Vagina (tissue), 2 donors: ENCODE measurements at regions of chr17 and their contacts with region 1.

Region 1: DNA sequence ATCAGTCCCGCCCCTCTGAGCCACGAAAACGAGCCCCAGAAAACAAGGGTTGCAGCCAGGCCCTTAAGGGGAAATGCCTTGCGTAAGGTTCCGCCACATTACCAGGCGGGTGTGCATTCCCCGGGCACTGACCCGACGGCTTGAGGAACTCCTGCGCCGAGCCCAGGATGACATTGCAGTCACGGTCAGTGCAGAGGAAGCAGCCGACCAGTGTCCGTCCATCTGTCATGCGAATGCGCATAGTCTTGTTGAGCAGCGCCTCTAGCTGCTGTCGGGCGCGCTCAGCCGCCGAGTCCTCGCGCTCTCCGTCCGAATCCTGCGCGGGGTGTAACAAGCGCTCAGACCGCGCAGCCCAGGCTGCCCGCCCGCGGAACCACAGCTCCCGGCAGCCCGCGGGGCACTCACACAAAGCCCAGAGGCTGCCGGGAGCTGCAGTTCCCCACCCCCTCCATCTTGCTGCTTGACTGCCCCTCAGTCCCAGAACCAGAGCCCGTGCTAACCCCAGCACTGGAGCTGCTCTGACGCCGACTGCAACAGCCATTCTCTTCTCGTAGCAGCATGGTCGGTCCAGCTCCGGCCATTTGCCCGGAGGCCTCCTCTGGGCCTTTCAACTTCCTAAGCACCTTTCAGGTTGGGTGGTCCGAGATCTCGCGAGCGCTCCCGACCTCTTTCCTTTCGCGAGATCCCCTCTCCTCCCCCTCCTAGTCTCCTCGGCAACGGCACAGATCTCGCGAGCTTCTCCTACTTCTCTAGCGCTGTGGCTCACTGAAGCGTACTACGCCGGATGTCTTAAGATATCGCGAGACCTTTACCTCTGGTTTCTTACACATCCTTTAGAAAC is at the start of gene NAA38:
- DNase-seq: peak; percentile 96 to 99
- H3K4me3 ChIP-seq: peak within 1 kb of the TSS; percentile 53 to 72
- H3K27ac ChIP-seq: peak within 1 kb of the TSS; percentile 85
- H3K4me1 ChIP-seq: peaks cover 38% of the 10 kb centered on the region
- H3K27me3 ChIP-seq: no peaks in the 10 kb centered on the region
- CTCF ChIP-seq: peak in 2 of 3 experiments; percentile 11 to 31
- POLR2A ChIP-seq: peak in 1 of 2 donors; percentile 54
- total RNA-seq, gene NAA38: 83.5 TPM

Region 2: DNA sequence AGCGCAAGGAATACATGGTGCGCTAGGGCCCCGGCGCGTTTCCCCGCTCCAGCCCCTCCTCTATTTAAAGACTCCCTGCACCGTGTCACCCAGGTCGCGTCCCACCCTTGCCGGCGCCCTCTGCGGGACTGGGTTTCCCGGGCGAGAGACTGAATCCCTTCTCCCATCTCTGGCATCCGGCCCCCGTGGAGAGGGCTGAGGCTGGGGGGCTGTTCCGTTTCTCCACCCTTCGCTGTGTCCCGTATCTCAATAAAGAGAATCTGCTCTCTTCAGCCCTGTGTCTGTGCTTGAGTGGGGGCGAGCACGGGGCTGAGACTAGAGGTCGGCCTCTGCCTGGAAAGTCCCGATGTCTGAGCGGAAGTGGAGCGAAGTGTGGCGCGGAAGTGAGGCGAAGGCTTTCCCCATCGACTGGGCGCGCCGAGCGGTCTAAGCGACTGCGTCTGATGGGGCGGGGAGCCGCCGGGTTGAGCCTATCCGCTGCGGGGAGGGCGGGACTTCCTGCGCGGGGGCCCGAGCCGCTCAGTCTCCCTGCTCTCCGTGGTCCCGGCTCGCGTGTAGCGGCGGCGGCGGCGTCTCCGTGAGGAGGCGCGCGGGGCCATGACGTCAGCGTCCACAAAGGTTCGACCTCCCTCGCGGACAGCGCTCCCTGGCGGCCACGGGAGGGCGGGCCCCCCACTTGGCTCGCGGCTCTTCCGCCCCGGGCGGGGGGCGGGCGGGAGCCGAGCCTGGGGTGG is 842.7 kb before region 1 on chr17:
- intact Hi-C with region 1: no loop called
- DNase-seq: peak in 1 of 2 donors; percentile 97
- H3K4me3 ChIP-seq: peak overlapping the region; percentile 68 to 85
- H3K27ac ChIP-seq: peak overlapping the region; percentile 96
- H3K4me1 ChIP-seq: peaks cover 71% of the 10 kb centered on the region
- H3K27me3 ChIP-seq: no peaks in the 10 kb centered on the region
- CTCF ChIP-seq: peak in 2 of 3 experiments; percentile 32 to 75
- POLR2A ChIP-seq: peak in 1 of 2 donors; percentile 70

Region 3: DNA sequence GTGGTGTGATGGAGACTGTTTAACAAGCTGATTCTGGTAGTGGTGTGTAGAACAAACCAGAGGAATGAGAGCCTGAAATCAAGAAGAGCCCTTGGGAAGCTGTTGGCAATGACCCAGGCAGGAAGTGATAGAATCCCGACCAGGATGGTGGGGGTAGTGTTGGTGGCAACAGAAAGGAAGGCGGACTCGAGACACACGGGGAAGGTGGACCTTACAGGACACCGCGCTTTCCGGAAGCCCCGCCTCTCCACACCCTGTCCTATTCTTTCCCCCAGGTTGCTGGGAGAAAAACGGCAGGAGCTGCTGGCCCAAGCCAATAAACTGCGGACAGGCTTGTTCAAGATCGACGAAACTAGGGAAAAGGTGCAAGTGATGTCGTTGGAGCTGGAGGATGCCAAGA is 53.1 kb before region 1 on chr17:
- intact Hi-C with region 1: no loop called
- DNase-seq: no peak
- H3K4me3 ChIP-seq: no peak overlapping the region
- H3K27ac ChIP-seq: no peak overlapping the region
- H3K4me1 ChIP-seq: no peaks in the 10 kb centered on the region
- H3K27me3 ChIP-seq: no peaks in the 10 kb centered on the region
- CTCF ChIP-seq: no peak
- POLR2A ChIP-seq: no peak

Region 4: DNA sequence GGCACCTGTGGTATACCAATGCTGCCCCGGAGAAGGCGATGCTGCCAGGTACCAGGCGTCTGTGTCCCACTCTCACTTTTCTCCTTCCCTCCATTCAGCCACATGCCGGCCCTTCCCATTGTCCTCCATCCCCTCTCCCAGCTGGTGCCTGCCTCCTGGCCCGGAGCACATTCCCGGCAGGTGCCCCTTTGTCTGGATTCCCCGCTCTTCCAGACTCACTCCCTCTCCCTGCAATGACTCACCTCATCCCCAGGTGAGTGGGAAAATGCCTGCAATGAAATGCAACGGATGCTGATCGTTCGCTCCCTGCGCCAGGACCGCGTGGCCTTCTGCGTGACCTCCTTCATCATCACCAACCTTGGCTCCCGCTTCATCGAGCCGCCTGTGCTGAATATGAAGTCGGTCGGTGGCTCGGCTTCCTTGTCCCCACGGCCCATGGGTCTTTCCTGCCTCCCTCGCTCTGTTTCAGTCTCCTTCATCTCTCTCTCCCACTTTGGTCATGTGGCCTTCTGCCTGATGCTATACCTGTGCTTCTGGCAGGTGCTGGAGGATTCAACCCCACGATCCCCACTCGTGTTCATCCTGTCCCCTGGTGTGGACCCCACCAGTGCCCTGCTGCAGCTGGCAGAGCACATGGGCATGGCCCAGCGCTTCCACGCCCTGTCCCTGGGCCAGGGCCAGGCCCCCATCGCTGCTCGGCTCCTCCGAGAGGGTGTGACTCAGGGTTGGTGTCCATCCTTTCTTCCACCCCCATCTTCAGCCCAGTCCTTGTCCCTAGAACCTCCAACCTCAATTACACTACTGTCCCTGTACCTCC is 33.3 kb before region 1 on chr17:
- intact Hi-C with region 1: loop called (anchors 5 kb)
- DNase-seq: no peak
- H3K4me3 ChIP-seq: no peak overlapping the region
- H3K27ac ChIP-seq: no peak overlapping the region
- H3K4me1 ChIP-seq: no peaks in the 10 kb centered on the region
- H3K27me3 ChIP-seq: no peaks in the 10 kb centered on the region
- CTCF ChIP-seq: no peak
- POLR2A ChIP-seq: no peak